Calu3 (cell line): ENCODE measurements at regions of chr11 and their contacts with region 1.

Region 1: DNA sequence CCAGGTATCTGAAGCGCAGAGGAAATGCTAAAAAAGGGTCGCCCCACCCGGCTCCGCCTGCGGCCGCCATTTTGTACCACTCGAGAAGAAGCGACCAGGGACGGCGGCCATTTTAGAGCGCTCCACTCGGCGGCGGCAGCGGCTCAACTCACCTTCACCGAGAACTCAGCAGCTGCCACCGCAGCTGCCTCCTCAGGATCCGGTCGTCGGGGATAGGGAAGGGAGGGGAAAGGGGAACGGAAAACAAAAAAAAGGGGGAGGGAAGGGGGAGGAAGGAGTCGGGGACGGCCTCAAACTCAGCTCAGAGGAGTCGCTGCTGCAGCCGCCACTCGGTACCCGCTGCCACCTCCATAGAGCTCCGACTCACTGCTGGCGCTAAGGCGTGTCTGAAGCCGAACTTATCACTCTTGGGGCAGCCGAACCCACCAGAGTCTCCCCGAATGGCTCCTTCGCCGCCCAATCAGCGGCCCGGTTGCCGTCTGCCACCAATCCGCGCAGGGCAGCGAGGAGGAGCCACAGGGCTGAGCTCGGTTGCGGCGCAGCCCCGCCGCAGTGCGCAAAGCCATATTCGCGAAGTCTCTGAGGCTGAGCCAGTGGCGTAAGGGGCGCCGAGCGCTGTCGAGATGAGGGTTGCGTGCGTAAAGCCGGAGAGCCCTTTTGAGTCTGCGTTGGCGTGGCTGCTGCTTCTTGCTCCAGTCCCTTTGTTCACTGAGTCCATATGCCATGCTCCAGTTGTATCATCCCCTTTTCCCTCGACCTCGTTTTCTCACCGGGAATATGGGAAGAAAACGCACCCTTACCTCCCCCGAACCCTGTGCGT is at the start of gene EIF4G2:
- DNase-seq: peak; percentile 97
- H3K4me3 Mint-ChIP-seq: peak within 1 kb of the TSS; percentile 95
- H3K27ac Mint-ChIP-seq: peak within 1 kb of the TSS; percentile 96
- H3K4me1 Mint-ChIP-seq: peaks cover 7% of the 10 kb centered on the region
- H3K27me3 Mint-ChIP-seq: no peaks in the 10 kb centered on the region
- CTCF ChIP-seq: no peak
- total RNA-seq, gene EIF4G2: 690 and 772 TPM in 2 replicates

Region 2: GRCh38 chr11:10742471-10743208 is 66.1 kb before region 1 on chr11:
- CTCF ChIA-PET with region 1: no interaction called
- intact Hi-C with region 1: no loop called
- DNase-seq: no peak
- H3K4me3 Mint-ChIP-seq: no peak overlapping the region
- H3K27ac Mint-ChIP-seq: no peak overlapping the region
- H3K4me1 Mint-ChIP-seq: peaks cover under 1% of the 10 kb centered on the region
- H3K27me3 Mint-ChIP-seq: no peaks in the 10 kb centered on the region
- CTCF ChIP-seq: no peak

Region 3: GRCh38 chr11:10857709-10858438 is 49.1 kb after region 1 on chr11 and contains the start of gene ZBED5:
- CTCF ChIA-PET with region 1: interaction called, 13 read pairs
- intact Hi-C with region 1: loop called (anchors 5 kb)
- DNase-seq: peak; percentile 95
- H3K4me3 Mint-ChIP-seq: peak within 1 kb of the TSS; percentile 96
- H3K27ac Mint-ChIP-seq: peak within 1 kb of the TSS; percentile 89
- H3K4me1 Mint-ChIP-seq: peaks cover 17% of the 10 kb centered on the region
- H3K27me3 Mint-ChIP-seq: no peaks in the 10 kb centered on the region
- CTCF ChIP-seq: no peak
- total RNA-seq, gene ZBED5: 49.8 and 51.4 TPM in 2 replicates

Region 4: DNA sequence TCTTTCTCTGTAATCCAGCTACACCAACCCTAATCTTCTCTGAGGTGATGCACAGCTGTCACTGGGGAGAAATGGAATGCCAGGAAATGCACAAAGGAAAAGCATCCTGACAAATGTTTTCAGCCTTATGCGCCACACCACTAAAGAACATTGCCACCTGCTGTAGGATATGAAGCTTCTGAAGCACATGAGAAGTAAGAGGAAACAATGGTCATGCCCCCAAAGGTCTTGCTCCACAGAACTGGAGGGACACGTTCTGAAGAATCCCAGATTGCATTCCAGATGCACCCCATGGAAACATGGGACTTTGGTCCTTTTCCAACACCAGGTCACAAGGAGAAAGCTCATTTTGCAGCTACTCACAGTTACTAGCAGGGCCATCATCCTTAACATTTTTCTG is 97.8 kb after region 1 on chr11:
- CTCF ChIA-PET with region 1: interaction called, 3 read pairs
- intact Hi-C with region 1: loop called (anchors 10 kb)
- DNase-seq: no peak
- H3K4me3 Mint-ChIP-seq: no peak overlapping the region
- H3K27ac Mint-ChIP-seq: no peak overlapping the region
- H3K4me1 Mint-ChIP-seq: peaks cover 52% of the 10 kb centered on the region
- H3K27me3 Mint-ChIP-seq: no peaks in the 10 kb centered on the region
- CTCF ChIP-seq: no peak

Region 5: DNA sequence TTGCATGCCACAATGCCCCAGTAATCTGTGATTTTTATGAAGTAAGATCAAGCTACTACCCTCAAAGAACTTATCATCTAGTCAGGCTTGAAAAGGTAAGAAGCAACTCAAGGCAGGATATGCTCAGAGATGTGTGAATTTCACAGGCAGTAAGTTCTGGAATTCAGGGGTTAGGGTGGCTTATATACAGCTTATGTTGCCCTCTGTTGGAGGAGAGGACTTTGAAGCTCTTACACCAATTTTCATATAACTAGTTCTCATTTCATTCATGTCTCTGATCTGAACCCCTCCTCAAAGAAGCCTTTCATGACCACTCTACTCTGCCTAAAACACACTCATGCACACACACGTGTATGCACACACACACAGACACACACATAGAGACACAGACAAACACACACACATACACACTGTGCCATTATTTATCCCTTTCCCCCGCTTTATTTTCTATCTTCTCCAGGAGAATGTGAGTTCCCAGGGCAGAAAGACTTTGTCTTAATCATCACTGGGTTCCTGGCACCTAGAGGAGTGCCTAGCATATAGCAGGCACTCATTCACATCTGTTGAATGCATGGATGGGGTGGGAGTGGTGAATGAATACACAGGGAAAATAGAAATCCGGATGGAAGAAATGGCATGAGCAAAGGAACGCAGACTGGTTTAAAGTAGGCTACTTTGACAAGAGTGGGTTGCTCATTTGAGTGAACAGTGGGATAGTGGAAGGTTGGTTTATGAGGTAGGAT is 269.8 kb after region 1 on chr11:
- CTCF ChIA-PET with region 1: no interaction called
- intact Hi-C with region 1: no loop called
- DNase-seq: no peak
- H3K4me3 Mint-ChIP-seq: no peak overlapping the region
- H3K27ac Mint-ChIP-seq: no peak overlapping the region
- H3K4me1 Mint-ChIP-seq: no peaks in the 10 kb centered on the region
- H3K27me3 Mint-ChIP-seq: peaks cover 95% of the 10 kb centered on the region
- CTCF ChIP-seq: no peak